Esophagus muscularis mucosa (tissue), 4 donors: ENCODE measurements at regions of chr14 and their contacts with region 1.

Region 1: GRCh38 chr14:64540208-64541157 is at the start of gene HSPA2:
- DNase-seq: peak; percentile 99
- H3K4me3 ChIP-seq: peak within 1 kb of the TSS; percentile 68 to 70 (median 68)
- H3K27ac ChIP-seq: peak within 1 kb of the TSS; percentile 91 to 95 (median 93)
- H3K4me1 ChIP-seq: peaks cover 18 to 31% (median 23%) of the 10 kb centered on the region in 4 donors
- H3K27me3 ChIP-seq: peaks cover 0 to 7% (median 0%) of the 10 kb centered on the region in 4 donors
- CTCF ChIP-seq: peak; percentile 86 to 94 (median 86)
- EP300 ChIP-seq: no peak
- POLR2A ChIP-seq: peak; percentile 90
- total RNA-seq, gene HSPA2: 196 to 334 (median 265) TPM

Region 2: GRCh38 chr14:64636208-64636979 is 95.9 kb after region 1 on chr14:
- intact Hi-C with region 1: loop called (anchors 2 kb)
- DNase-seq: no peak
- H3K4me3 ChIP-seq: no peak overlapping the region
- H3K27ac ChIP-seq: peak overlapping the region in 3 of 4 donors; percentile 24 to 43 (median 32)
- H3K4me1 ChIP-seq: peaks cover 4 to 18% (median 12%) of the 10 kb centered on the region in 4 donors
- H3K27me3 ChIP-seq: no peaks in the 10 kb centered on the region
- CTCF ChIP-seq: peak; percentile 89 to 95 (median 93)
- EP300 ChIP-seq: no peak
- POLR2A ChIP-seq: no peak

Region 3: DNA sequence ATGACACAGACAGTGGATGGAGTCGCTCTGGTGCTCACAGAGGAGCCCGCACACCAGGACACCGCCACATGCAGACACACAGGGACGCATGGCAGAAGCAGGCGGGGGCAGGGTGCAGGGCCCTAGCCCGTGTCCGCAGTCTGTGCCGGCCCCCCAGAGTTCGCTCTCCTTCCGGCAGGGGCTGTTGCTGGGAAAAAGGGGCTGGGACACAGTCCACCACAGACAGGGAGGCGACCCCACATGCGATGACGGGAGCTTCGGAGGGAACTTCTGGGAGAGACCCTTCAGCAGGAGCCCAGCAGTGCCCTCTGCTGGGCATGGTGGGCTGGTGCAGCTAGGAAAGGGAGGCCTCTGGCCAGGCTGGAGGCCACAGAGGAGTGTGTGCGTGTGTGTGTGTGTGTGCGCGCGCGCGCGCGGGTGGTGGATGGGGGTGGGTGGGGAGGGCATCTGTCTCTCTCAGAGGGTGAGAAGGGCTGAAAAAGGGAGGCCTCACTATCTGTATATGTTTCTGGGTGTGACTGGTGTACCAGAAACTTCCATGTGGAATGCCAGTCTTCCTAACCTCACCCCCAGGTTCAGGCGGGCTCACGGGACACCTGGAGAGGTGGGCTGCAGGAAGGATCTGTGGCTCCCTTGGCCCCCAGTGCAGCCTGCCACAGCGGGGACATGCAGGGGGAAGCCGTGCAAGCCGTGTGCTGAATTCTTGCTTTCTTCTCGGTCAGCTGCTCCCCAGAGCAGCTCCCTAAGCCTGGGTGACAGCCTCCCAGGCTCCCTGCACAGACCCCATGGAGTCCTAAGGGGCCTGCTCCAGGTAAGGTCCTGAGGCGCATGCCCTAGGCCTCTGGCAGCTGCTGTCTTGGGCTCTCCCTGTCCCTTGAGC is 224.4 kb after region 1 on chr14:
- intact Hi-C with region 1: loop called (anchors 10 kb)
- DNase-seq: no peak
- H3K4me3 ChIP-seq: peak overlapping the region; percentile 32 to 55 (median 42)
- H3K27ac ChIP-seq: peak overlapping the region in 3 of 4 donors; percentile 47 to 52 (median 48)
- H3K4me1 ChIP-seq: peaks cover 25 to 43% (median 40%) of the 10 kb centered on the region in 4 donors
- H3K27me3 ChIP-seq: no peaks in the 10 kb centered on the region
- CTCF ChIP-seq: peak; percentile 81 to 95 (median 95)
- EP300 ChIP-seq: no peak
- POLR2A ChIP-seq: no peak